ENCODE measurements at regions of chr11 and their contacts with region 1.

Region 1: GRCh38 chr11:81237139-81237538 is 1496.5 kb downstream of the FAM181B start:
- DNase-seq: peak; percentile 36
- H3K4me3 ChIP-seq: no peak overlapping the region
- H3K27ac ChIP-seq: no peak overlapping the region
- H3K4me1 ChIP-seq: no peaks in the 10 kb centered on the region
- H3K27me3 ChIP-seq: no peaks in the 10 kb centered on the region
- CTCF ChIP-seq: peak; percentile 36

Region 2: DNA sequence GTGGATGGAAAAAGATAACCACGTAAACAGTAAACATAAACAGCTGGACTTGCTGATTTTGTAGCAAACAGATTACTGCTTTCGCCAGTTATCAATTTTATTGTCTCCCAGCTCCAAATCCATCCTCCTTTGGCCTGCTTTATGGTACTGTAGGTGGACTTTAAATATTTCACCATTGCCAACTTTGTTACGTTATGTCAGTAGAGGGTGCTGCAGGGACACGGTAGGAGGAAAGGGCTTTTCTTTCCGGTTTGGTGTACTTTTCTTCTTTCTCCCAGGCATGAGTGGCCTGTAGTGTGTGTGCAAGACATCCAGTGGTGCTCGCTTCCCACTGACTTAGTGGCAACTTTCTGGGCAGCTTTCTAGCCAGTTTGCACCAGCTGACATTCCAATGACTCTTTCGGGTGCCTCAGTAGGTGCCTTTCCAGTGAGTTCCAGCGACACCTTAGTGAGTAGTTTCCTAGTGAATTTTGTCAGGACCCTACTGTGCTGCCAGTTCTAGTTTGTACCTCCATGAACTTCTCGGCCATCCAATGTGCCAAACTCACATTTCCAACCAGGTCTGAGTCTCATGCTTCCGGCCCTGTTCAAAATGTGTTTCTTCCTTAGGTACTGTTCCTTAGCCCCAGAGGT is 1528.7 kb before region 1 on chr11:
- intact Hi-C with region 1: loop called (anchors 5 kb)
- DNase-seq: peak; percentile 26
- H3K4me3 ChIP-seq: no peak overlapping the region
- H3K27ac ChIP-seq: no peak overlapping the region
- H3K4me1 ChIP-seq: no peaks in the 10 kb centered on the region
- H3K27me3 ChIP-seq: no peaks in the 10 kb centered on the region
- CTCF ChIP-seq: peak; percentile 35

Region 3: DNA sequence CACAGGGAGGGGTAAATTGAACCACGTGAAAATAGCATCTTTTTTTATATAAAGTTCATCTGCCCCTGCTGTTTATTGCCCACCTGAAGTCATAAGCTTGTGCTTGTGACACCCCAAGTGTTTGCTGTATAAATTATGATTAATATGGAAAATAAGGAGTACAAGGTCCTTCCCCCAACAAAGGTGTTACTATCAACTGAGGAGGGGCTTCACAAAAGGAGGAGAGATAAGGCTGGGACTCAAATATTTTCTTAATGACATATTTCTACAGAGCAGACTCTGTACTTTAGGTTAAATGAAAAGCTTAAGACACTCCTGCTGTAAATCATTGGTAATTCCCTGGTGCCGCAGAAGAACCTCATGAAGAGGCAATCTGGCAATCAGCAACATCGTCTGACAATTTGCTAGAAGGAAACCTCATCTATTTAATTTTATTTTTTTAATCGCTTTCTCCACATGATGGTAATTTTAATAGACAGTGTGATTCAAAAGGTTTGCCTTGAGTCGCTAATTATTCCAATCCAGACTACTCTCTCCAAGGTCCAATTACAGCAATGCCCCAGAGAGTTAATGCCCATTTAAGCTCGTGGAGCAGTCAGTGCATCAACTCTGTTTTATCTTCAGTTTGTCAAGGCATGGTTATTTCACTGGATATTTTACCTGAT is 64.2 kb after region 1 on chr11:
- intact Hi-C with region 1: no loop called
- DNase-seq: no peak
- H3K4me3 ChIP-seq: no peak overlapping the region
- H3K27ac ChIP-seq: no peak overlapping the region
- H3K4me1 ChIP-seq: no peaks in the 10 kb centered on the region
- H3K27me3 ChIP-seq: no peaks in the 10 kb centered on the region
- CTCF ChIP-seq: no peak

Measured in colonic mucosa (tissue), 4 donors.